Activated CD4-positive, alpha-beta T cell treated with anti-CD3 and anti-CD28 coated beads for 36 hours (primary cell): ENCODE measurements at regions of chr3 and their contacts with region 1.

Region 1: GRCh38 chr3:28348629-28349483 is at the starts of genes AZI2 and ZCWPW2:
- DNase-seq: peak; percentile 96
- ATAC-seq: peak; percentile 87
- H3K4me3 Mint-ChIP-seq: peak within 1 kb of the TSS; percentile 98
- H3K27ac Mint-ChIP-seq: peak within 1 kb of the TSS; percentile 98
- H3K4me1 Mint-ChIP-seq: peaks cover 43% of the 10 kb centered on the region
- H3K27me3 Mint-ChIP-seq: no peaks in the 10 kb centered on the region
- total RNA-seq, gene AZI2: 52.3 to 78.8 TPM
- total RNA-seq, gene ZCWPW2: 0.37 to 0.39 TPM

Region 2: DNA sequence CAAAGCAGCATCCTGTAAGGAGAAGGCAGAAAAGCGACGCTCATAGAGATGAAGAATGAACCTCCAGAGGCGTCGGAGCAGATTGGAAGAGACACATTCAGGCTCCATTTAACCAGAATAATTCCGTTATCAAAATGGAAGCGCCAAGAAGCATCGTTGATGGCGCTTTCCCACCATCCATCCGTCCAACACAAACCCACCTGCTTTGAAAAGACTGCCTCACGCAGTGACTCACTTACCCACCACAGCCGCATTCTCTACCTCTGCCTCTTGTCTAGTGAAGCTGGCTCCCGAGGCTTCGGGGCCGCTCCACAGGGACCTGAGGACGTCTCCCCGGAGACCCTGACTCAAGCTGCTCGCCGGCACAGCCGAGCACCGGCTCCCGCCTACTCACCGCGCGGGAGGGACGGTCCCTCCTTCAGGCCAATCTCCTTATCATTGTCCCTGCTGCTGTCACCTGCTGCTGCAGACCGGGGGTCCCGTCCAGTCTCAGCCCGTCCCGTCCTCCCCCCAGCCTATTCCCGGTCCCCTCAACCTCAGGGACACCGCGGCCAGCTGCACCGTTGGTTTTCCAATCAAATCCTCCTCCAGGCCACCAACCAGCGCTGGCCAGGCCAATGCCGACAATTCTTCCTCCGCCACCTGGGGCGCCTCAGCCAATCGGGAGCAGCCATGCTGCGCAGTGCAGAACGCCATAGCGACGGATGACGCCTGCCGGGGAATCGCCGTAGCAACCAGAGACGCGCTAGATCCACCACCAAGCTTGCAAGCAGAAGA is 979.8 kb before region 1 on chr3 and contains the start of gene NEK10:
- CTCF ChIA-PET with region 1: no interaction called
- POLR2A ChIA-PET with region 1: no interaction called
- intact Hi-C with region 1: loop called in 1 of 2 experiments (anchors 5 kb)
- DNase-seq: peak; percentile 95
- ATAC-seq: peak; percentile 99
- H3K4me3 Mint-ChIP-seq: peak within 1 kb of the TSS; percentile 92
- H3K27ac Mint-ChIP-seq: peak within 1 kb of the TSS; percentile 72
- H3K4me1 Mint-ChIP-seq: peaks cover 14% of the 10 kb centered on the region
- H3K27me3 Mint-ChIP-seq: no peaks in the 10 kb centered on the region
- total RNA-seq, gene NEK10: 0.19 to 0.57 TPM

Region 3: DNA sequence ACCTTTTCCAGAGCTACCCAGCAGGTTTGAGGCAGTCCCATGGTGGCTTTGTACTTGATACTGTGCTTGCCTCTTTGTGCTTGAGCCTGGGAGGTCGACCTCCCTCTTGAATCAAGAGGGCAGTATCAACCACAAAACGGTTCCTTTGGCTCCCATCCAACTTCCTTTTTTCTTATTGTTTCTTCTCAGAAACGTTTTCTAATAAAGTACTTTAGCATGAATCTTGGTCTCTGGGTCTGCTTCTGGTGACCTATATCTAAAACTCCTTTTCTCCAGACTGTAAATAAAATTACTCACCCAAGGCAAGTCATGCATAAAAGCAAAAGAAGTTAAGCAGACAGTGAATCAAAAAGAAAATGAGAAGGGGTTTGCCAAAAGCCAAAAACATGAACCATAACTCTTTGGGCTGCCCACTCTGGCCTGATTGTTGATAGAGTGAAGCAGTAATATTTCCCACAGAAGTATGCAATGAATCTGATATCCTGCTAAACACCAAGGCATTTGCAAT is 752.5 kb before region 1 on chr3:
- CTCF ChIA-PET with region 1: no interaction called
- POLR2A ChIA-PET with region 1: no interaction called
- intact Hi-C with region 1: loop called in 1 of 2 experiments (anchors 10 kb)
- DNase-seq: peak; percentile 10
- ATAC-seq: peak; percentile 71
- H3K4me3 Mint-ChIP-seq: no peak overlapping the region
- H3K27ac Mint-ChIP-seq: no peak overlapping the region
- H3K4me1 Mint-ChIP-seq: peaks cover 20% of the 10 kb centered on the region
- H3K27me3 Mint-ChIP-seq: no peaks in the 10 kb centered on the region

Region 4: DNA sequence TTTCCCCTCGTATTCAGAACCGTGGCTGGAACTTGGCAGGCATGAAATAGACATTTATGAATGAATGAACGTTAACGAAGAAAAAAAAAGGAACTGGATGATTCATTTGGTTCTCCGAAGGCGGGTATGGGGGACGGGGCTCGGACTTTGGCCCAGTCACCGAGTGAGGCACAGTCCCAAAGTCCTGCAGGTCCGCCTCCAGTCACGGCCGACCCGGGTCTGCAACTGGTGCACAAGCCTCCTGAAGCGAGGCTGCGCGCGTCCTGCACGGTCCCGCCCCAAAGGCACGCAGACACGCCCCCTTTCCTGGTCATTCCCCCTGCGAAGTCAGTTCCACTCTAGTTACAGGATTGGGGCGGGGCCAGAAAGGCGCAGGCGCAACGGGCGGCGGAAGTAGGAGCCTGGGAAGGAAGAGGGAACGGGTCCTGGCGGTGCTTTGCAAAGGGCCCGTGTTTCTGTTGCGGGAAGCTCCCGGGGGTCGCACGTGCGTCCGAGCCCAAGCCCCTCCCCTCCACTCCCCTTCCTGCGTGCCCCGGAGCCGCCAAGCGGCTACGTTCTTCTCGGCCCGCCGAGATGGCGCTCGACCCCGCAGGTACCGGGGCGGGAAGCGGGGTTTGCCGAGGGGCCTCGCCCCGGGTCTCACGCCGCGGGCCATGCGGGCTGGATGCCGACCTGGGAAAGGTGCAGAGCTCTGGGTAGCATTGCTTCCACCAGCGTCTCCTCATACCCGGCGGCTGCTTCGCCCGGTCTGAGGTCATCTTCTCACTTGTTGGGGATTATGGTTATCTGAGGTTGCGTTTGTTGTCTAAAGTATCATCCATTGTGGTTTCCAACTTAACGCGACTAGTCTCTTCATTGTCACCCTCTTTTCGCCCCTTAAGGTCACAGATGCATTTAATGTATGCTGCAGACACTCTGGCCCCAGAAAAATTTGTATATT is 107.4 kb before region 1 on chr3 and contains the start of gene CMC1:
- CTCF ChIA-PET with region 1: no interaction called
- POLR2A ChIA-PET with region 1: no interaction called
- intact Hi-C with region 1: loop called (anchors 1 kb)
- DNase-seq: peak; percentile 96
- ATAC-seq: peak; percentile 97
- H3K4me3 Mint-ChIP-seq: peak within 1 kb of the TSS; percentile 83
- H3K27ac Mint-ChIP-seq: peak within 1 kb of the TSS; percentile 91
- H3K4me1 Mint-ChIP-seq: peaks cover 45% of the 10 kb centered on the region
- H3K27me3 Mint-ChIP-seq: no peaks in the 10 kb centered on the region
- total RNA-seq, gene CMC1: 21.6 to 28.3 TPM

Region 5: DNA sequence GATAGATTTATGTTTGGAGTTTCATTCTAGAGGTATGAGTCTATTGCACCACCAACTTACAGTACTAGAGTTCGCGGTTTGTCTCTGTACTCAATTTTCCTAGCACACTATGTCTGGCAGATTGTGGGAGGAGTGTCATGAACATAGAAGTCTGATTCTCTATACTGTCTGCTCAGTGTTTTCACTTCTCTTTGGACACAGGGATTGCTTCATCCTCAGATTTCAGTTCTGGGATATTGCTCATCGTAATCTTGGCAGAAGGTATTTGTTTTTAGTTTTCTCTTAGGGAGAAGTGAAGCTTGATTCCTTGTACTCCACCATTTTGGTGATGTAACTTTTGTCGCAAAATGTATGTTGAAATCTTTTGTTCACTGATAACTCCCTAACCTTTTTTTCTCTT is 27.6 kb after region 1 on chr3:
- CTCF ChIA-PET with region 1: no interaction called
- POLR2A ChIA-PET with region 1: no interaction called
- intact Hi-C with region 1: no loop called
- DNase-seq: no peak
- ATAC-seq: no peak
- H3K4me3 Mint-ChIP-seq: no peak overlapping the region
- H3K27ac Mint-ChIP-seq: no peak overlapping the region
- H3K4me1 Mint-ChIP-seq: no peaks in the 10 kb centered on the region
- H3K27me3 Mint-ChIP-seq: peaks cover 2% of the 10 kb centered on the region